Ascending aorta (tissue), 2 donors: ENCODE measurements at regions of chr4 and their contacts with region 1.

Region 1: DNA sequence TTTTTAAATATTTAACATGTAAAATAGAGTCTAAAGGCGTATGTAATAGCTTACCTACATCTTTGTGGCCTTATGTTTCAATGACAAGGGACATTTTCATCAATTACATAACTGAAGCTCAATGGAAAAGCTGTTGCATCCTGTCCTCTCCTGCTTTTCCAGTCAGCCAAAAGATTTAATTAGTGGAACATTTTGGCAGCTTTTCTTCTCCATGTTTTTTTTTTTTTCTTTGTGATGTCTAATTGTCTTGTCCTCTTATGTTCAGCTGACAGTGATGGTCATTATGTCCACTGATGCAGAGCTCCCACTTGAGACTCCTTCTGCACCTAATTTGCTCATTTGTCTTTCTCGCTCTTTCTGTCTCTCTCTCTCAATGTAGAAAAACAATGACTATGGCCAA is 422.2 kb downstream of the GABRG1 start:
- DNase-seq: no peak
- H3K4me3 ChIP-seq: no peak overlapping the region
- H3K27ac ChIP-seq: no peak overlapping the region
- H3K4me1 ChIP-seq: no peaks in the 10 kb centered on the region
- H3K27me3 ChIP-seq: no peaks in the 10 kb centered on the region
- CTCF ChIP-seq: no peak

Region 2: DNA sequence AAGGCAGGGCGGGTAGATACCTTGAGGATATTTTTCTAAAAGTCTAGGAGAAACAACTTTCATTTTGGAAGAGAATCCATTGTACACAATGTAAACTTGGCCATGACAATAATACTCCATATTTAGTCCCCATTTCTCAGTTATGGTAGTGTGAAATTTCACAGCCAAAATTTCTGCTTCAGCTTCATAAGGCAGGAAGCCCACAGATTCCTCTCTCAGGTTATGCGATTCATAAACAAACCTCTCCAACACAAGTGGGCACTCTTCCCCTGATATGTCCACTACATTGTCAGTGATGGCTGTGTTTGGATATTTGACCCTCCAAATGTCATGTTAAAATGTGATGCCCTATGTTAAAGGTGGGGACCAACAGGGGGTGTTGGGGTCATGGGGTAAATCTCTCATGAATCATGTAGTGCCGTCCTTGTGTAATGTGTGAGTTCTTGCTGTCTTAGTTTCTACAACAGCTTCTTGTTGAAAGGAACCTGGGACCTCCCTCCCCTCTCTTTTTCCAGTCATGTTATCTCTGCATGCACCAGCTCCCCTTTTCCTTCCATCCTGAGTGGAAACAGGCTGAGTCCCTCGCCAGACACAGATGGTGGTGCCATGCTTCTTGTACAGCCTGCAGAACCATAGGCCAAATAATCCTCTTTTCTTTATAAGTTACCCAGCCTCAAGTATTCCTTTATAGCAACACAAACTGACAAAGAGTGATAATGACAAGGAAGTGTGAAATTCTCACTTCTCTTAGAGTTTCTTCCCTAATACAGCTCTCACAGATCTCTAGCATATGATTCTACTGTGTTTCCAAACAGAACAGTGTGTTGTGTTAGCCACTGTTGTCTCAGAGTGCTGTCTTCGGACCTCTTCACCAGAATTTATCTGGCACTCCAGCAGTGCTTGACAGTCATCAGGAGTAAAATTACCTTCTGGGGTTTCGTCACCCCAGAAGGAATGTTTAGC is 376.9 kb before region 1 on chr4:
- intact Hi-C with region 1: no loop called
- DNase-seq: no peak
- H3K4me3 ChIP-seq: no peak overlapping the region
- H3K27ac ChIP-seq: no peak overlapping the region
- H3K4me1 ChIP-seq: no peaks in the 10 kb centered on the region
- H3K27me3 ChIP-seq: no peaks in the 10 kb centered on the region
- CTCF ChIP-seq: no peak

Region 3: GRCh38 chr4:46073778-46074177 is 372.2 kb after region 1 on chr4:
- intact Hi-C with region 1: loop called (anchors 10 kb)
- DNase-seq: no peak
- H3K4me3 ChIP-seq: no peak overlapping the region
- H3K27ac ChIP-seq: no peak overlapping the region
- H3K4me1 ChIP-seq: no peaks in the 10 kb centered on the region
- H3K27me3 ChIP-seq: no peaks in the 10 kb centered on the region
- CTCF ChIP-seq: no peak